Uterus (tissue), 4 donors: ENCODE measurements at regions of chr1 and their contacts with region 1.

Region 1: GRCh38 chr1:115717541-115717940 is 51.0 kb downstream of the CASQ2 start:
- DNase-seq: peak; percentile 38 to 64
- H3K4me3 ChIP-seq: no peak overlapping the region
- H3K27ac ChIP-seq: no peak overlapping the region
- H3K4me1 ChIP-seq: no peaks in the 10 kb centered on the region
- H3K27me3 ChIP-seq: no peaks in the 10 kb centered on the region
- CTCF ChIP-seq: peak; percentile 34 to 60 (median 55)
- POLR2A ChIP-seq: no peak

Region 2: GRCh38 chr1:115748401-115749150 is 31.0 kb after region 1 on chr1:
- intact Hi-C with region 1: no loop called
- DNase-seq: no peak
- H3K4me3 ChIP-seq: no peak overlapping the region
- H3K27ac ChIP-seq: peak overlapping the region in 1 of 2 donors; percentile 37
- H3K4me1 ChIP-seq: no peaks in the 10 kb centered on the region
- H3K27me3 ChIP-seq: no peaks in the 10 kb centered on the region
- CTCF ChIP-seq: no peak
- POLR2A ChIP-seq: no peak

Region 3: GRCh38 chr1:115771847-115772457 is 54.4 kb after region 1 on chr1:
- intact Hi-C with region 1: loop called (anchors 10 kb)
- DNase-seq: peak; percentile 66 to 82
- H3K4me3 ChIP-seq: no peak overlapping the region
- H3K27ac ChIP-seq: peak overlapping the region in 1 of 2 donors; percentile 59
- H3K4me1 ChIP-seq: no peaks in the 10 kb centered on the region
- H3K27me3 ChIP-seq: no peaks in the 10 kb centered on the region
- CTCF ChIP-seq: peak; percentile 68 to 84 (median 74)
- POLR2A ChIP-seq: no peak

Region 4: DNA sequence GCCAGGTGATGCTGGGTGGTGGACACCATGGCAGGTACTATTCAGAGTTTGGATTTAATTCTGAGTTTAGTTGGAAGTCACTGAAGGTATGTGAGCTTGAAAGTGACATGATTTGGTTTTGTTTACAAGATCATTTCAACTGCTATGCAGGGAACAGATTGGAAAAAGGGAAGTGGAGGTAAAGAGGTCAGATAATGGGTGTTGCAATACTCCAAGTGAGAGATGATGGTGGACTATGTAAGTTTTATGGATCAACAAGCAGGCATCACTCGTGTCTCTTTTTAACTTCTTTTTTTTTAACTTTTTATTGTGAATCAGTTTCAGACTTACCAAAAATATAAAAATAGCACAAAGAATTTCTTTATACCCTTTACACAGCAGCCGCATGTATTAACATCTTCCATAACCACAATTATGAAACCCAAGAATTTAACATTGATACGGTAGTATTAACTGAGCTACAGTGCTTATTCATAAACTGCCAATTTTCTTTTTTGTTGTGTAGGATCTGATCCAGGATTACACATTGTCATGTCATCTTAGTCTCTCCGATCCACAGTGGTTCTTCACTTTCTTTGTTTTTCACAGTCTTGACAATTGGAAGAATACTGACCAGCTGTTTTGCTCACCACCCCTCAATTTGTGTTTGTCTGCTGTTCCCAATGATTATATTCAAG is 148.3 kb after region 1 on chr1:
- intact Hi-C with region 1: no loop called
- DNase-seq: no peak
- H3K4me3 ChIP-seq: no peak overlapping the region
- H3K27ac ChIP-seq: no peak overlapping the region
- H3K4me1 ChIP-seq: no peaks in the 10 kb centered on the region
- H3K27me3 ChIP-seq: no peaks in the 10 kb centered on the region
- CTCF ChIP-seq: no peak
- POLR2A ChIP-seq: no peak

Region 5: DNA sequence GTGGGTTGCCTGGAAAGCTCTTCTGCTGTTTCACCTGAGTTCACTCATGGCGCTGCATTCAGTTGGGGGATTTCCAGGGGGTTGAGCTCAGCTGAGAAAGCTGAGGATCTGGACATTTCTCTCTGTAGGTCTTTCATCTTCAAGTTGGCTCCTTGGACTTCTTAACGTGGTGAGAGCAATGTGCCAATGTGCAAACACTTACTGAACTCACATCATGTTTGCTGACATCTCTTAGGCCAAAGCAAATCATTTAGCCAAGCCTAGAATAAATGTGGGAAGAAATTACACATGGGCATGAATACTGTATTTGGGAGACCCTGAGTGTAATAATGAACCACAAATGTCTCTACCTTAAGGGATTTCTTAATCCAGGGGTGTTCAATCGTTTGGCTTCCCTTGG is 216.1 kb after region 1 on chr1:
- intact Hi-C with region 1: no loop called
- DNase-seq: no peak
- H3K4me3 ChIP-seq: no peak overlapping the region
- H3K27ac ChIP-seq: no peak overlapping the region
- H3K4me1 ChIP-seq: no peaks in the 10 kb centered on the region
- H3K27me3 ChIP-seq: no peaks in the 10 kb centered on the region
- CTCF ChIP-seq: no peak
- POLR2A ChIP-seq: no peak